Aorta (tissue), 5 donors: ENCODE measurements at regions of chrX and their contacts with region 1.

Region 1: DNA sequence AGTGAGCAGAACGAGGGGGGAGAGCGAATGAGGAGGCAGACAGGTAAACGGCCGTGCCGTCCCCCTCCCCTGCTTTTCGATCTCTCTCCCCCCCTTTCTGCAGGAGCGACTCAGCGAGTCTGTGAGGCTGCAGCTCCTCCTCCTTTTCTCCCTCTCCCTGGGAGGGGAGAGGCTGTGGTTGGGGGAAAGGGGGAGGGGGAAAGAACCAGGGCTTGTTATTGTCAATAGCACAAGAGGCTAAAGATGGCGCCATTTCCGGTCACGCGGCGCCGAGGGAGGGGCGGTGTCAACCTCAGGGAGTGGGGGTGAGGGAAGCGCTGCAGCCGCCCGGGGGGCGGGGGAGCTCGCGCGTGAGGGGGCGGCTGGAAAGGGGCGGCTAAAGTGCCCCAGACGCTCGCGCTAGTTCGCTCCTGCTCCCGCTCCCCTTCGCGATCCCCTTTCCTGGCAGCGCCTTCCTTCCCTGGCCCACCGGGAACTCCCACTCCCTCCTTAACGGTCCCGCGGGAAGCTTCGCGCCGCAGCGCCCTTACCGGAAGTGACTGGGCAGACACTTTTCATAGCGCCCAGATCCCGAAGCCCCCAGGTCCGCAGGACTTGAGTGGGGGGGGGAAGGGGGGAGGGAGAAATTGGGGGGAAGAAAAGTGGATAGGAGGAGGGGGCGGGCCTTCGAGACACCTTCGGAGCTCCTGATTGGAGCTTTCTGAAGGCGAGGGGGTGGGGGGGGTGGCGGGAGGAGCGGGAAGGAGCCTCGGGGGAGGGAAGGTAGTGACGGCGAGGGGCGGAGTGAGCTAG is at the start of gene CUL4B:
- DNase-seq: peak; percentile 96 to 97
- ATAC-seq: peak; percentile 97
- H3K4me3 ChIP-seq: peak within 1 kb of the TSS; percentile 58 to 99
- H3K27ac ChIP-seq: peak within 1 kb of the TSS; percentile 52 to 98
- H3K4me1 ChIP-seq: no peaks in the 10 kb centered on the region
- H3K27me3 ChIP-seq: no peaks in the 10 kb centered on the region
- total RNA-seq, gene CUL4B: 47.3 to 48.2 TPM

Region 2: GRCh38 chrX:120224388-120224787 is 336.6 kb before region 1 on chrX:
- intact Hi-C with region 1: no loop called
- DNase-seq: no peak
- ATAC-seq: no peak
- H3K4me3 ChIP-seq: no peak overlapping the region
- H3K27ac ChIP-seq: no peak overlapping the region
- H3K4me1 ChIP-seq: no peaks in the 10 kb centered on the region
- H3K27me3 ChIP-seq: no peaks in the 10 kb centered on the region

Region 3: DNA sequence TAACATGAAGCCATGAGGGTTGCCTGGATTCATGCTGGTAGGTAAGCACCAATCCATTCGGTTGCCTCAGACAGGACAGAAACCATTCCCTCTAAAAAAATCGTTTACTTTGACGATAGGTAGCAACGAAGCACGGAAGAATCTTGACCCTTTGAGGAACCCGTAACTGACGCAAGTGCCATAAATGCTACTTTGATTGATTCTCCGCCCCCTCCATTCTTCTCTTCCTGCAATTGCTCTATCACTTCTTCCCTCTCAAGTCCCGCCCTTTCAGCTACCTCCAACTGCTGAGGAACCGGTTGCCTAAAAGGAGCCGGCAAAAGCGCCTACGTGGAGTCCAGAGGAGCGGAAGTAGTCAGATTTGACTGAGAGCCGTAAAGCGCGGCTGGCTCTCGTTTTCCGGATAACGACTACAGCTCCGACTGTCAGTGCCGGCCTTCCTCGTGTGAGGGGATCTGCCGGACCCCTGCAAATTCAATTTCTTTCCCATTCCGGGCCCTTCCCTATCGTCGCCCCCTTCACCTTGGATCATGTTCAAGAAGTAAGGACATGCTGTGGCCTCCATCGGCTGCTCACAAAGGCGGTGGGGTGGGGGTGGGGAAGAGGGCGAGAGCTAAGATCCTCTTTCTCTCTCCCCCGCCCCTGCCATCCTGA is 42.8 kb after region 1 on chrX and contains the start of gene MCTS1:
- intact Hi-C with region 1: loop called (anchors 5 kb)
- DNase-seq: peak; percentile 89 to 91
- ATAC-seq: peak; percentile 95
- H3K4me3 ChIP-seq: peak within 1 kb of the TSS; percentile 41 to 62
- H3K27ac ChIP-seq: peak within 1 kb of the TSS; percentile 36 to 83
- H3K4me1 ChIP-seq: no peaks in the 10 kb centered on the region
- H3K27me3 ChIP-seq: no peaks in the 10 kb centered on the region
- total RNA-seq, gene MCTS1: 26.7 to 28.6 TPM

Region 4: GRCh38 chrX:120629667-120630537 is 68.9 kb after region 1 on chrX and contains the start of gene C1GALT1C1:
- intact Hi-C with region 1: loop called (anchors 2 kb)
- DNase-seq: peak; percentile 95
- ATAC-seq: peak; percentile 97
- H3K4me3 ChIP-seq: peak within 1 kb of the TSS; percentile 40 to 57
- H3K27ac ChIP-seq: peak within 1 kb of the TSS in 1 of 2 donors; percentile 84
- H3K4me1 ChIP-seq: no peaks in the 10 kb centered on the region
- H3K27me3 ChIP-seq: no peaks in the 10 kb centered on the region
- total RNA-seq, gene C1GALT1C1: 19.0 to 21.6 TPM